ENCODE measurements at regions of chr11 and their contacts with region 1.

Region 1: DNA sequence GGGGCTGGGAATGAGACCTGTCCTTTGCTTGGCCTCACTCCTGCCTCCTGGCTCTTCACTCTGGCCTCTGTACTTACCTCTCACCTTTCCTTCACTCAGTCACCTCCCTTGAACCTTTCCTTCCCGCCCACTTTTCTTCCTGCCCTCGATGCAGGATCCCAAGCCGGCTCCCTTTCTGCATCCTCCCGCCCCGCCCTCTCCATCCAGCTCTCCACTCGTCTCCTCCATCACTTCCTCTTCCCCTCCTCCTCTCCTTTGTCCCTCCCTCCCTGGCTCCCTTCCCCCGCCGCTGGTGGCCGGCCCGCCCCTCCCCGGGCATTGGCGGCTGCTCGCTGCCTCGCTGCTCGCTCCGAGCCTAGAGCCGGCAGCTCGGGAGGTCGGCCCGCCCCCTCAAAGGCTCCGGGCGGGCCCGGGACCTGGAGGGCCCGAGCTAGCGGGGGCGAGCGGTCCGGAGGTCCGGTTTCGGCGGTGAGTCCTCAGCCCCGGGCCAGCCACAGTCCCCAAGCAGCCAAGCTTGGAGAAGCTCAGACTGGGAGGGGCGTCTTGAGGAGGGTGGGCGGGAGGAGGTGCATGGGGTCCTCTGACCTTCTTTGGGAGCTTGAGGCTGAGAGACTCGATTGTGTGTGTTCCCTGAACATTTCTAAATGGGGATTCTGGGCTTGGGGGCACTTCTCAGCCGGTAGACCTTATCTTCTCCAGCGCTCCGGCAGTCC is 13.8 kb downstream of the PHLDB1 start:
- DNase-seq: peak; percentile 45
- H3K4me3 Mint-ChIP-seq: peak overlapping the region; percentile 68
- H3K27ac Mint-ChIP-seq: no peak overlapping the region
- H3K4me1 Mint-ChIP-seq: peaks cover 14% of the 10 kb centered on the region
- H3K27me3 Mint-ChIP-seq: peaks cover 3% of the 10 kb centered on the region

Region 2: DNA sequence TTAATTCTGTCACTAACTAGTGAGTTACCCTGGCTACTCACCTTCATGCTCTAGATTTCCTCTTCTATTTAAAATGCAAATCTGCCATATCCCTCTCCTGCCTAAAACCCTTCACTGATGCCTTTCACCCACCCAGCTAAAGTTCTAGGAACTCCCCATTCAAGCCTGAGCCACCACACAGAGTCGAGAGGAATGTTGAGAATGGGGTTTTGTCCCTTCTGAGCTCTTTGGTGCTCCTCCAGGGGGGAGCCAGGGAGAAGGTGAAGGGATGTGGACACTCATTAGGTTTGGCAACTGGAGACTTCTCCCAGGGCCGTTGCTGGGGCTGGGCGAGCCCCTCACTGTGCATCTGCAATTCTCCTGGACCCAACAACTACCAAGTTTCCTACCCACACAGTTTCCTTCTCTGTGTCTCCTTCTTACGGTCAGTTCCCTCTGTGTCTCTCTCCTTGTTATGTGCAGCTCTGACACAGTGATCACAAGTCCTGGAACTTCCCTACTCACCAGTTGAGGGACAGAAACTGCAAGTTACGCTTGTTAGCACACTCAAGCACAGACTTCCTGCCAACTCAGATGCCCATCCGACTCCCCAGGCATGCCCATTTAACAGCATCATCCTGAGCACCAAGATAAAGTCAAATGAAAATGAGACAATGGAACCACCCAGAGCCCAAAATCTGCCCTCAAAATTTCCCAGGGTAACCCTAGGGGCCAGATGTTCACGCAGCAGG is 641.6 kb before region 1 on chr11:
- CTCF ChIA-PET with region 1: no interaction called
- intact Hi-C with region 1: no loop called
- DNase-seq: peak; percentile 53
- H3K4me3 Mint-ChIP-seq: no peak overlapping the region
- H3K27ac Mint-ChIP-seq: peak overlapping the region; percentile 16
- H3K4me1 Mint-ChIP-seq: peaks cover 54% of the 10 kb centered on the region
- H3K27me3 Mint-ChIP-seq: no peaks in the 10 kb centered on the region

Region 3: DNA sequence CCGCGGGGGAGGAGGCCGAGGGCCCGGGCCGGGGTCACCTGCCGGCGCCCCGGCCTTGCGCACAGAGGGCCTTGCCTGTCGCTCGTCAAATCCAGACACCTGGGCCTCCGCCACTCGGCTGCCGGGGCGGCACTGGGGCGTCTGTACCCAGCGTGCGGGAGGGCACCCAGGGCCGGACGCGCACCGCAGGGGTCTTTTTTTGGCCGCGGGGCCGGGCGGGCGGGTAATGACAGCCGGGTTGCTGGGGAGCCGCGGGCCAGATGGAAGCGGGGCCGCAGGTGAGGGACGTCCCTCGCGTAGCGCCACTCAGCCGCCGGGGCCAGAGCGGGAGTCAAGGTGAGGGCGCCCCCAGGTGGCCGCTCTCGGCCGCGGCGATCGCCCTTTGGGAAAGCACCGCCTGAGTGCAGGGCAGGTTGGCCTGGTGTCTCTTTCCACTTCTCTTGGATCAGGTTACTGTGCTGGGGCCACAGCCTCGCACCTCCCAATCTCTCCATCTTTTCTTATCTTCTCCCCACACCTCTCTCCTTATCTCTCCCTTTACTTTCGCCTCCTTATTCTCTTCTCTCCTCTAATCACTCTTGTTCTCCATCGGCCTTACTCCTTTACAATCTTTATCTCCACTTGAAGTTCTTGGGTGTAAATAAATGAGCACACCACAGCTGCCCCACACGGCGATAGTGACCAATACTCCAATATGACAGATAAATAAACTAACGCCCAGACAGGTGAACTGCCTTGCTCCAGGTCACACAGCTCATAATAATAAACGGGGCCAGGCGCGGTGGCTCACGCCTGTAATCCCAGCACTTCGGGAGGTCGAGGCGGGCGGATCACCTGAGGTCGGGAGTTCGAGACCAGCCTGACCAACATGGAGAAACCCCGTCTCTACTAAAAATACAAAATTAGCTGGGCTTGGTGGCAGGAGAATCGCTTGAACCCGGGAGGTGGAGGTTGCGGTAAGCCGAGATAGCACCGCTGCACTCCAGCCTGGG is 10.1 kb before region 1 on chr11:
- CTCF ChIA-PET with region 1: interaction called, 14 read pairs
- intact Hi-C with region 1: no loop called
- DNase-seq: peak; percentile 90
- H3K4me3 Mint-ChIP-seq: peak overlapping the region; percentile 51
- H3K27ac Mint-ChIP-seq: no peak overlapping the region
- H3K4me1 Mint-ChIP-seq: peaks cover 20% of the 10 kb centered on the region
- H3K27me3 Mint-ChIP-seq: peaks cover 17% of the 10 kb centered on the region